ENCODE measurements at regions of chr11 and their contacts with region 1.

Region 1: DNA sequence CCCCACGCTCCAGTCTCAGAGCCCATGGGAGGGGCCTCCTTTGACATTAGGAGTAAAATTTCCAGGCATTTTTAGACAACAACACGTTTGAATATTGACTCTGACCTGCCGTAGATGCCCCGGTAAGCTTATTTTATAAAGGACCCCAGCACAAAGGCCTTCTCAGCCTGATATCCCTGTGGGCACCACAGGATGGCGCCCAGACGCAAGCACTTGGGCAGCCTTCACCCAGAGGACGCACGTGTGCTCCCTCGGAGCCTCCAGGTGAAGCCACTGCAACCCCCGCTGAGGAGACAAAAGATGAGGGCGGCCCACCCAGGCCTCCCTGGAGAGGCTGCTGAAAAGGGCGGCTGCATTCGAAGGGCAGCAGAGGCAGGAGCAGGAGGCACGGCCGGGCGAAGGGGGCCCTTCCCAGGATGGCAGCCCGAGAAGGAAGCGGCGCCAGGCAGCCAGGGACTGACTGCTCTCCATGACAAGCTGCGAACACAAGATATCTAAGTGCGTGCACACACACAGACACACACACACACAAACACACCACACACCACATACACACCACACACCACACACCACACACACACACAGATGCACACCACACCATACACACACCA is 15.2 kb upstream of the TH start:
- DNase-seq: no peak
- ATAC-seq: peak in 3 of 4 donors; percentile 37 to 50 (median 47)
- H3K4me3 ChIP-seq: no peak overlapping the region
- H3K27ac ChIP-seq: no peak overlapping the region
- H3K4me1 ChIP-seq: no peaks in the 10 kb centered on the region
- H3K27me3 ChIP-seq: peaks cover 0 to 66% (median 18%) of the 10 kb centered on the region in 3 donors
- CTCF ChIP-seq: peak; percentile 32

Region 2: GRCh38 chr11:2222451-2222850 is 35.7 kb after region 1 on chr11:
- intact Hi-C with region 1: no loop called
- DNase-seq: no peak
- ATAC-seq: no peak
- H3K4me3 ChIP-seq: no peak overlapping the region
- H3K27ac ChIP-seq: no peak overlapping the region
- H3K4me1 ChIP-seq: no peaks in the 10 kb centered on the region
- H3K27me3 ChIP-seq: peaks cover 0 to 15% (median 3%) of the 10 kb centered on the region in 3 donors
- CTCF ChIP-seq: no peak

Region 3: GRCh38 chr11:2234963-2235362 is 48.2 kb after region 1 on chr11:
- intact Hi-C with region 1: loop called in 1 of 2 experiments (anchors 5 kb)
- DNase-seq: no peak
- ATAC-seq: no peak
- H3K4me3 ChIP-seq: no peak overlapping the region
- H3K27ac ChIP-seq: no peak overlapping the region
- H3K4me1 ChIP-seq: no peaks in the 10 kb centered on the region
- H3K27me3 ChIP-seq: no peaks in the 10 kb centered on the region
- CTCF ChIP-seq: no peak

Region 4: DNA sequence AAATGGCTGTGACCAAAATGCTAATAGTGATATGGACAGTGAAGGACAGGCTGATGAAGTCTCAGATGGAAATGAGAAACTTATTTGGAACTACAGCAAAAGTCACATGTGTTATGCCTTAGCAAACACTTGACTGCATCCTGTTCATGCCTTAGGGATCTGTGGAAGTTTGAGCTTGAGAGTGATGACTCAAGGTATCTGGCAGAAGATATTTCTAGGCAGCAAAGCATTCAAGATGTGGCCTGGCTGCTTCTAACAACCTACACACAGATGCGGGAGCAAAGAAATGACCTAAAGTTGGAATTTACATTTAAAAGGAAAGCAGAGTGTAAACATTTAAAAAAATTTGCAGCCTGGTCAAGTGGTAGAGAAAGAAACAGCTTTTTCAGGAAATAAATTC is 162.2 kb after region 1 on chr11:
- intact Hi-C with region 1: no loop called
- DNase-seq: no peak
- ATAC-seq: no peak
- H3K4me3 ChIP-seq: no peak overlapping the region
- H3K27ac ChIP-seq: no peak overlapping the region
- H3K4me1 ChIP-seq: no peaks in the 10 kb centered on the region
- H3K27me3 ChIP-seq: no peaks in the 10 kb centered on the region
- CTCF ChIP-seq: no peak

Measured in psoas muscle (tissue), 8 donors.